T-cell (primary cell): ENCODE measurements at regions of chr22 and their contacts with region 1.

Region 1: DNA sequence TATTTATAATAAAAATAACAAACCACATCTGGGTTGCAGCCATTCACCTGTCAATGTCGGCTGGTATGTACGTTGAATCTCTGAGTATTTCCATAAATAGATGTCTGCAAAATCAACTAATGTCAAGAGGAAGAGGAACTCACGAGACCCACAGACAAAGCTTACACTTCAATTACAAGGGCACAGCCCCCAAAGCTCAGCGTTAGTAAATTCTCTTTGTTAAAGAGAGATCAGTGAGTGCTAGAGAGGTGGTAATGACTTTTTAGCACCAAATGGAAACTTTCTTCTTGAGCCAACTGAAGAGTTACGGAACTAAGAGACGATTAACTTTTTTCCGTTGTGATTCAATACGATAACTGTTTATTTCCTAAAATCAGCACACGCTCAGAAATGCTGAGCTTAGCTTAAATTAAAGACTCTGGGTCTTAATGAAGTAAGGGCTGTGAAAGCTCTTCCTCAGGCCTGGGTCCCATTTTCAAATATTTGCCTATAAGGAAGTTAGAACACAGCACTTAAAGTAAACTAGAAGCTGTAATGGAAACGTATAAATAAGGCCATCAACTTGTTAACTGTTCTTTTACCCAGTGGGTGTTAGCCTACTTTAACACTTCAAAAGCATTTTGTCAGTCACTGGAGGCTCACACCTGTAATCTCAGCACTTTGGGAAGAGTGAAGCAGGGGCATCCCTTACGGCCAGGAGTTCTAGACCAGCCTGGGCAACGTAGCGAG is 22.8 kb upstream of the TFIP11 start:
- DNase-seq: no peak
- ATAC-seq: no peak
- H3K4me3 ChIP-seq: no peak overlapping the region
- H3K4me3 Mint-ChIP-seq: no peak overlapping the region
- H3K27ac ChIP-seq: no peak overlapping the region
- H3K27ac Mint-ChIP-seq: peak overlapping the region; percentile 44 to 61
- H3K4me1 ChIP-seq: no peaks in the 10 kb centered on the region
- H3K4me1 Mint-ChIP-seq: peaks cover 0 to 17% (median 6%) of the 10 kb centered on the region in 3 donors
- H3K27me3 ChIP-seq: no peaks in the 10 kb centered on the region
- H3K27me3 Mint-ChIP-seq: no peaks in the 10 kb centered on the region

Region 2: GRCh38 chr22:26610072-26610958 is 75.3 kb after region 1 on chr22:
- CTCF ChIA-PET with region 1: no interaction called
- POLR2A ChIA-PET with region 1: interaction called in 1 of 2 experiments, 10 read pairs
- DNase-seq: peak in 11 of 35 experiments; percentile 5 to 53 (median 21)
- ATAC-seq: peak; percentile 28 to 83 (median 70)
- H3K4me3 ChIP-seq: no peak overlapping the region
- H3K4me3 Mint-ChIP-seq: no peak overlapping the region
- H3K27ac ChIP-seq: peak overlapping the region; percentile 41
- H3K27ac Mint-ChIP-seq: peak overlapping the region; percentile 84 to 86
- H3K4me1 ChIP-seq: peaks cover 0 to 28% of the 10 kb centered on the region in 2 experiments
- H3K4me1 Mint-ChIP-seq: peaks cover 13 to 29% (median 14%) of the 10 kb centered on the region in 3 donors
- H3K27me3 ChIP-seq: peaks cover 0 to 6% of the 10 kb centered on the region in 2 experiments
- H3K27me3 Mint-ChIP-seq: peaks cover 2 to 5% of the 10 kb centered on the region in 2 donors